Naive thymus-derived CD4-positive, alpha-beta T cell (primary cell): ENCODE measurements at regions of chr4 and their contacts with region 1.

Region 1: DNA sequence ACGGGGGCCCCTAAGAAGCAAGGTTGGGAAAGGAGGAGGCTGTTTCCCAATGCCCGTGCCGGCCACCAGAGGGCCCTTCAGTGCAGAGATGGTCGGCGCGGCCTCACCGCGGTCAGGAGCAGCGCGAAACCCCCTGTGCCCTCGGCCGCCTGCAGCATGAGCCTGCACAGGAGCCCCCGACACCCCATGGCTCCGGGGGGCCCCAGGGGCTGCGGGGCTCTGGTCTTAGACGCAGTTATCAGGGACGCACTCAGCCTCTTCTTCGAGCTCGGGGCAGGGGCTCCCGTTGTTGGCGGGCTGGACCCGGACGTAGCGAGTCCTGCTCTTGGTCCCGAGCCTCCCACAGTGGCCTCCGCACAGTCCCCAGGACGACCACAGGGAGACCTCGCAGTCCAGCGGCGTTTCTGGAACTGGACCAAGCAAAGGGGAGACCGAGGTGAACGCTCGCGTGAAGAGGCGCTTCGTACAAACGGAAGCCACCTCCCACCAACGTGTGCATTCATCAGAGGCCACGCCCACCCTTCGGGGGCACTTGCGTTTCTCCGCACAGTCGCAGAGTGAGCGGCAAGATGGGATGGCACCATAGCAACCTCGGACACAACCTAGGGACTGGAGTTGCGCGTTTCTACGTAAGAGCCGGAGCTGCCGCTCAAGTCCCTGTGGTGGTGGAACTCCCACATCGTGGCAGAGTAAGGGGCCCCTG is 5.0 kb downstream of the SPON2 start:
- DNase-seq: peak; percentile 74 to 89 (median 82)
- ATAC-seq: peak; percentile 92
- H3K4me3 ChIP-seq: peak overlapping the region; percentile 90
- H3K4me3 Mint-ChIP-seq: peak overlapping the region; percentile 82 to 90 (median 87)
- H3K27ac ChIP-seq: peak overlapping the region; percentile 74
- H3K27ac Mint-ChIP-seq: peak overlapping the region in 8 of 9 donors; percentile 51 to 86 (median 70)
- H3K4me1 ChIP-seq: peaks cover 3 to 17% of the 10 kb centered on the region in 2 donors
- H3K4me1 Mint-ChIP-seq: peaks cover 8 to 26% (median 18%) of the 10 kb centered on the region in 7 donors
- H3K27me3 ChIP-seq: peaks cover 0 to 9% of the 10 kb centered on the region in 2 donors
- H3K27me3 Mint-ChIP-seq: peaks cover 0 to 21% (median 6%) of the 10 kb centered on the region in 5 donors

Region 2: DNA sequence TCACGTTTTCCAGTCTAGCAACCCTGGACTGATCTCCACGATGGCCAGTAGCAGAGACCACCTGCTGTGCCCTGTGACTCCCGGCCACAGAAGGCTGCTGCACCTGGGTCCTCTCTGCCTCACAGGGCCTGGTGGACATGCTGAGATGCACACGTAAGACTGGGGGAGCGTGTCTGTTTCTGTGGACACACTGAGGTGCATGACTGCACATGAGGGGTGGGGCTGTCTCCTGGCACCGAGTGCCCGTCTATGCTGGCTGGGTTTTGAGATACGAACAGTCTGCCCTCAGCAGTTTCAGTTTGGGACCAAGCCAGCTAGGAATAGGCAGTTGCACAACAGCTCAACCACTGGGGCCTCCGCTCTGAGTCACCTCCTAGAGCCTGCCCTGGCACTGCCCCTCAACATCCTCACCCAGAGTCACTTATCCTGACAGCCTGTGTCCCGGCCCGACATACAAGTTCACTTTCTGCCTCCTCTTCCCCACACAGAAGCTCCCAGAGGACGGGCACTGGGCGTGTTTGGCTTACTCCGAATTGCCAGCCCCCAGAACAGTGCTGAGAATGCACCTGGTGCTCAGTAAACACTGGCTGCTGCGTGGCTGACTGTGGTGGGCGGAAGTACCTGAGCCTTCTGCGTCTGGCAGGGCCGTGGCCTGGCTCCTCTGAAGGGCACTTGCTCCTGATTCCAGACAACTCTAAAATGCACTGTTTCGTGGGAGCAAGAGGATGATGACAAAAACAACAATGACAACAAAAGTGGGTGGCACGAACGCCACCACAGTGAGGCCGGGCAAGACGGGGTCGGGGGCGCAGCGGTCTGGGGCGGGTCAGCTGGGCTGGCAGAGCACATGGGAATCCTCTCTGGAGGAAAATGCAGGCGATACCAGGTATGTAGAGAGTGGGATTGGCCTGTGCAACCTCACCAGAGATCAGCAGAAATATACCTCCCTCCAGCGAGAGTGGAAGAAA is 84.9 kb before region 1 on chr4:
- CTCF ChIA-PET with region 1: no interaction called
- POLR2A ChIA-PET with region 1: no interaction called
- intact Hi-C with region 1: no loop called
- DNase-seq: no peak
- ATAC-seq: peak; percentile 78
- H3K4me3 ChIP-seq: no peak overlapping the region
- H3K4me3 Mint-ChIP-seq: no peak overlapping the region
- H3K27ac ChIP-seq: no peak overlapping the region
- H3K27ac Mint-ChIP-seq: no peak overlapping the region
- H3K4me1 ChIP-seq: no peaks in the 10 kb centered on the region
- H3K4me1 Mint-ChIP-seq: peaks cover 0 to 7% (median 0%) of the 10 kb centered on the region in 7 donors
- H3K27me3 ChIP-seq: no peaks in the 10 kb centered on the region
- H3K27me3 Mint-ChIP-seq: peaks cover 3 to 35% (median 21%) of the 10 kb centered on the region in 5 donors

Region 3: GRCh38 chr4:1187182-1187581 is 19.8 kb after region 1 on chr4:
- CTCF ChIA-PET with region 1: interaction called, 3 read pairs
- POLR2A ChIA-PET with region 1: interaction called, 3 read pairs
- intact Hi-C with region 1: loop called in 1 of 2 experiments (anchors 2 kb)
- DNase-seq: peak in 4 of 9 donors; percentile 44 to 54 (median 49)
- ATAC-seq: peak; percentile 94
- H3K4me3 ChIP-seq: no peak overlapping the region
- H3K4me3 Mint-ChIP-seq: peak overlapping the region in 1 of 10 donors; percentile 13
- H3K27ac ChIP-seq: no peak overlapping the region
- H3K27ac Mint-ChIP-seq: peak overlapping the region in 4 of 9 donors; percentile 4 to 59 (median 38)
- H3K4me1 ChIP-seq: peaks cover 0 to 24% of the 10 kb centered on the region in 2 donors
- H3K4me1 Mint-ChIP-seq: peaks cover 9 to 31% (median 15%) of the 10 kb centered on the region in 7 donors
- H3K27me3 ChIP-seq: no peaks in the 10 kb centered on the region
- H3K27me3 Mint-ChIP-seq: no peaks in the 10 kb centered on the region

Region 4: DNA sequence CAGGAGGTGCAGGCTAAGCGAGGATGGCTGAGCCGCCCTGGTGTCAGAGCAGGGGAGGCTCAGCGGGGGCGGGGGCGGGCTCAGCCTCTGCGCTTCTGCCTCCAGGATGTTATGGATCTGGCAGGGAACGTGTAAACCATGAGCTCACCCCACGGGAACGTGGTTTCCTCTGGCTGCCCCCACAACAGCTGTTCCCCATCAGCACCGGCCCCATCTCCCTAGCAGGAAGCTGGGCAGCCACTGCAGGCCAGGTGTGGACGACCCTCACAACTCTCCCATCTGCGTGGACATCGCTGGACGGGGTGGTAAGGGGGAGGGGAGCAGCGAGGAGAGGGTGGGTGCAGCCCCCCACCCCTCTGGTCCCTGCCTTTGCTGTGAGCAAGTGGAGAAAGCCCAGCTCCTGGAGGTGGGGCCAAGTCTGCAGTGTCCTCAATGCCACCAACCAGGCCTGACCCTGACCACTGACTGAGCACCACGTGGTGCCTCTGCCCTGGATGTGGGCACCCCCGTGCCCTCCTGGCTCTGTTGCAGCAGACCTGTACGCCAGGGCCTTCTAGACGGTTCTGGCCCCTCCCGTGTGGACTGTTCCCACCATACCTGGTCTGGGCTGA is 33.1 kb after region 1 on chr4:
- CTCF ChIA-PET with region 1: interaction called, 4 read pairs
- POLR2A ChIA-PET with region 1: interaction called, 5 read pairs
- intact Hi-C with region 1: loop called (anchors 1 kb)
- DNase-seq: peak in 1 of 9 donors; percentile 26
- ATAC-seq: no peak
- H3K4me3 ChIP-seq: peak overlapping the region; percentile 85
- H3K4me3 Mint-ChIP-seq: peak overlapping the region; percentile 29 to 93 (median 84)
- H3K27ac ChIP-seq: peak overlapping the region; percentile 68
- H3K27ac Mint-ChIP-seq: peak overlapping the region in 5 of 9 donors; percentile 19 to 99 (median 59)
- H3K4me1 ChIP-seq: peaks cover 21 to 59% of the 10 kb centered on the region in 2 donors
- H3K4me1 Mint-ChIP-seq: peaks cover 12 to 57% (median 43%) of the 10 kb centered on the region in 7 donors
- H3K27me3 ChIP-seq: no peaks in the 10 kb centered on the region
- H3K27me3 Mint-ChIP-seq: no peaks in the 10 kb centered on the region

Region 5: GRCh38 chr4:1216869-1217294 is 49.5 kb after region 1 on chr4:
- CTCF ChIA-PET with region 1: interaction called, 6 read pairs
- POLR2A ChIA-PET with region 1: no interaction called
- intact Hi-C with region 1: loop called (anchors 1 kb)
- DNase-seq: peak; percentile 47 to 75 (median 70)
- ATAC-seq: peak; percentile 83
- H3K4me3 ChIP-seq: peak overlapping the region; percentile 22
- H3K4me3 Mint-ChIP-seq: peak overlapping the region; percentile 61 to 77 (median 76)
- H3K27ac ChIP-seq: peak overlapping the region; percentile 52
- H3K27ac Mint-ChIP-seq: peak overlapping the region; percentile 26 to 84 (median 67)
- H3K4me1 ChIP-seq: peaks cover 25 to 27% of the 10 kb centered on the region in 2 donors
- H3K4me1 Mint-ChIP-seq: peaks cover 26 to 50% (median 32%) of the 10 kb centered on the region in 7 donors
- H3K27me3 ChIP-seq: no peaks in the 10 kb centered on the region
- H3K27me3 Mint-ChIP-seq: no peaks in the 10 kb centered on the region

Region 6: DNA sequence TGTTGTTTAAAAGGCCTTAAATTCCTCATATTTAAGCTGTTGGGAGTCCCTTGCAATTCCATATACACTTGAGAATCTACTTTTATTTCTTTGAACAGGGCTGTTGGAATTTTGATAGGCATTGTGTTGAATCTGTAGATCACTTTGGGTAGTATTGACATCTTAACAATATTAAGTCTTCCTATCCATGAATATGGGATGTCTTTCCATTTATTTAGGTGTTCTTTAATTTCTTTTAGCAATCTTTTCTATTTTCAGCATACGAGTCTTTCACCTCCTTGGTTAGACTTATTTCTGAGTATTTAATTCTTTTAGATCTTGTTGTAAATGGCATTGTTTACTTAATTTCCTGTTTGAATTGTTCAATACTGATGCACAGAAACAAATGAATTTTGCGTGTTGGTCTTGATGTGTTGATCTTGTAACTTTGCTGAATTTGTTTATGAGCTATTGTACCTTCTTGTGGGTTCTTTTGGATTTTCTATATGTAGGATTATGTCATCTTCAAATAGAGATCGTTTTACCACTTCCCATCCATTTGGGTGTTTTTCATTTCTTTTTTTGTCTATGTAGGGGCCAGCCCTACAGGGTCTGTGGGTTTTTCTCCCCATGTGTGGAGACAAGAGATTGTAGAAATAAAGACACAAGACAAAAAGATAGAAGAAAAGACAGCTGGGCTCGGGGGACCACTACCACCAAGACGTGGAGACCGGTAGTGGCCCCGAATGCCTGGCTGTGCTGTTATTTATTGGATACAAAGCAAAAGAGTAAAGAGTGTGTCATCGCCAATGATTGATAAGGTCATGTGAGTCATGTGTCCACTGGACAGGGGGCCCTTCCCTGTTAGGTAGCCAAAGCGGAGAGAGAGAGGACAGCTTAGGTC is 99.7 kb after region 1 on chr4:
- CTCF ChIA-PET with region 1: interaction called, 43 read pairs
- POLR2A ChIA-PET with region 1: interaction called, 11 read pairs
- intact Hi-C with region 1: loop called (anchors 1 kb)
- DNase-seq: peak in 5 of 9 donors; percentile 36 to 59 (median 48)
- ATAC-seq: peak; percentile 73
- H3K4me3 ChIP-seq: peak overlapping the region; percentile 53
- H3K4me3 Mint-ChIP-seq: peak overlapping the region; percentile 49 to 87 (median 72)
- H3K27ac ChIP-seq: peak overlapping the region; percentile 45
- H3K27ac Mint-ChIP-seq: peak overlapping the region; percentile 40 to 96 (median 82)
- H3K4me1 ChIP-seq: peaks cover 0 to 7% of the 10 kb centered on the region in 2 donors
- H3K4me1 Mint-ChIP-seq: peaks cover 8 to 22% (median 15%) of the 10 kb centered on the region in 7 donors
- H3K27me3 ChIP-seq: no peaks in the 10 kb centered on the region
- H3K27me3 Mint-ChIP-seq: no peaks in the 10 kb centered on the region

Region 7: DNA sequence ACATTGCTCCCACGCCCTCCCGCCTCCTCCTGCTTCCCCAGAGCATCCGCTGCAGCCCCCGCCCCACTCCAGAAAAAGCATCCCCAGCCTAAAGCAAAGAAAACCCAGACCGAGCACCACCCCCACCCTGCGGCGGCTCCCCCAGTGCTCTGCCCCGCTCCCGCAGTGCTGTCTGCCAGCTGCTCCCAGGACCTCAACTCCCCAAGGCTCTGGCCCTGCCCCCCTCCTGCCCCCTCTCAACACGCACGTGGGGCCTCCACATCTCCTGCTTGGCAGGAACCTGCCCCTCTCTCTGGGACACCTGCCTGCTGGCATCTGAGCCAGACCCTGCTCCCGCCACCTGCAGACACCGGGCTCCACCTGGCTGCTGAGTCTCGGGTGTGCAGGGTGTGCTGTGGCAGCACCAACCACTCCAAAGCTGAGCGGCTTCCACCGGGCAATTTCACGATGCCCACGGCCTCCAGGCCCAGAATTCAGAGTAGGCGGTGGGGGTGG is 437.4 kb after region 1 on chr4:
- CTCF ChIA-PET with region 1: interaction called, 3 read pairs
- POLR2A ChIA-PET with region 1: no interaction called
- intact Hi-C with region 1: loop called in 1 of 2 experiments (anchors 1 kb)
- DNase-seq: peak in 7 of 9 donors; percentile 55 to 81 (median 70)
- ATAC-seq: peak; percentile 80
- H3K4me3 ChIP-seq: peak overlapping the region; percentile 46
- H3K4me3 Mint-ChIP-seq: peak overlapping the region in 9 of 10 donors; percentile 55 to 84 (median 75)
- H3K27ac ChIP-seq: peak overlapping the region; percentile 45
- H3K27ac Mint-ChIP-seq: peak overlapping the region in 8 of 9 donors; percentile 77 to 97 (median 86)
- H3K4me1 ChIP-seq: peaks cover 10 to 29% of the 10 kb centered on the region in 2 donors
- H3K4me1 Mint-ChIP-seq: peaks cover 0 to 35% (median 13%) of the 10 kb centered on the region in 7 donors
- H3K27me3 ChIP-seq: no peaks in the 10 kb centered on the region
- H3K27me3 Mint-ChIP-seq: no peaks in the 10 kb centered on the region